Right ventricle myocardium superior (tissue), 1 donor: ENCODE measurements at regions of chr11 and their contacts with region 1.

Region 1: GRCh38 chr11:117807482-117808327 is 10.7 kb upstream of the DSCAML1 start:
- DNase-seq: peak; percentile 91
- ATAC-seq: peak; percentile 74

Region 2: GRCh38 chr11:117428856-117429229 is 378.9 kb before region 1 on chr11:
- intact Hi-C with region 1: no loop called
- DNase-seq: no peak
- ATAC-seq: no peak

Region 3: DNA sequence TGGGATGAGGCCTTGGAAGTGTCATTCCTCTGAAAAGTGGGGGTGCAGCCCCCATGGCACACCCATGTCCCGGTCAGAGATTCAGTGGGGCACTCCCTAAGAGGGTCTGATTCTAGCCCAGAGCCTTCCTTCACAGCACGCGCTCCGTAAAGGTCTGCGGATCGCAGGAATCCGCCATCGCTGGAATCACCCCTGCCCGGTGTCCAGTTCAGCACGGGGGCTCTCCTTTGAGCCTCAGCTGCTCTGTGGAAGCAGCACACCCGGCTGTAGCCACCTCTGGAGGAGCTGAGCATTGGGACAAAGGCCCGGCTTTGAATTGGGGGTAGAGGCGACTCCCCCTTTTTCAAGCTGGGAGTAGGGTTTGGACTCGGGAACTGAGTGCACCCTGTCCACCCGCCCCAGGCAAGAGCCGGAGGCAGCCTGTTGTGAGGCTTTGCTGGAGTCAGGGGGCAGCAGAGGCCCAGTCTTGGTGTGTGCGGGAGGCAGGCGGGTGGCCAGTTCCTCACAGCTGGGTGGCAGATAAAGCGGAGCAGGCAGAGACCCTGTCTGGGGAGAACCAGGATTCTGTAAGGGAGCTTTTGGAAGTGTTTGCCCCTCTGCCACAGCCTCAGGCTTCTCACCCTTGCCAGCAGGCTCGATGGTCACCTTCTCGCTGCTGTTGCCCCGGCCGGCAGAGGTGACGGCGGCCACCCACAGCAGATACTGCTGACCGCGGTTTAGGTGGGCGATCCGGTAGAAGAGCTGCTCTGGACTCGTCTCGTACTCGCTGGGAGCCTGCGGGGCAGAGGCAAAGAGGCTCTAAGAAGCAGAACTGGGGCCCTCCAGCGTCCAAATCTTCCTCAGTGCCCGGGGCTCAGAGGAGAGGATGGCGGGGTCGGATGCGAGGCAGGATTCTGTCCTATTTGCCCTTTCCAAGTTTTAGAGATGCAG is 364.2 kb before region 1 on chr11:
- intact Hi-C with region 1: loop called (anchors 5 kb)
- DNase-seq: peak; percentile 79
- ATAC-seq: peak; percentile 91

Region 4: GRCh38 chr11:117717485-117718314 is 90.0 kb before region 1 on chr11:
- intact Hi-C with region 1: no loop called
- DNase-seq: peak; percentile 56
- ATAC-seq: peak; percentile 63

Region 5: GRCh38 chr11:117985953-117986887 is 178.5 kb after region 1 on chr11 and contains the start of gene IL10RA:
- intact Hi-C with region 1: no loop called
- DNase-seq: peak; percentile 93
- ATAC-seq: peak; percentile 97
- total RNA-seq, gene IL10RA: 6.2 TPM

Region 6: DNA sequence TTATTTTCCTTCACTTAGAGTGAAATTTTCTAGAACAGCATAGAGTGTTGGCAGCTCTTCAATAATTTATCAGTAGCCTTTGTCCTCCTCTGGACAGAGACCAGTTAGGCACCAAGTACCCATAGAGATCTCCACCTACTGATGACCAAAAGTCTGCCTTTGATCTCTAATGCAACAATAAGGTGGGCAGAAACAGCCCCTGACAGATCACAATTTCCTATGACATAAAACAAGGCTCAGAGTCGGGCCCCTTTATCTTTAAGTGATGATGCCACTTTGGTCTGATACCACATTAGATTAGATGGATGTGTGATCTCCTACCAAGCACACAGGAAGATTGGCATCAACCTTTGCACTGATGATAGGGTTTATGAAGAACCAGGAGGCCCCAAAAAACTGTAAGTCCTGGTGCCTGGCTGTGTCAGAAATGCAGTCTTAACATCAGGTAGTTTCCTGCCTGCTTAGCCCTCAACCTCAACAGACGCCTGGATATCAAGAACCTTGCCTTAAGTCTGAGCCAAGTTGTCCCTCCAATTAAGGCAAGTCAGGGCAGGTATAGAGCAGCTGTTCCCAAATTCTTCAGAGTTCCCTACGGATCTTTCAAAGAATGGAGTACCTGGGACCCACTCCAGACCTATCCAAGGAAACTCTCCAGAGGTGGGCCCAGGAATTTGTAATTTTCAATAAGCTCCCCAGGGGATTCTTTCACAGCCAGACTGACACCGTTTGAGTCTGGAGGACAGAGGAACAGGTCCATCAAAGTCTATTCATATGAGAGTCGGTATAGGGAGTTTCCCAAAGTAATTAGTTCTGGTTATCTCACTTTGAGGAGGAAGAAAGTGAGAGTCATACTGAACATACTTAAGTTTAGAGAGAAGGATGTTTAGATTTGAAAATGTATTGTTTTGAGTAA is 238.6 kb after region 1 on chr11:
- intact Hi-C with region 1: no loop called
- DNase-seq: no peak
- ATAC-seq: no peak